Adrenal gland (tissue), 19 donors: ENCODE measurements at regions of chr4 and their contacts with region 1.

Region 1: DNA sequence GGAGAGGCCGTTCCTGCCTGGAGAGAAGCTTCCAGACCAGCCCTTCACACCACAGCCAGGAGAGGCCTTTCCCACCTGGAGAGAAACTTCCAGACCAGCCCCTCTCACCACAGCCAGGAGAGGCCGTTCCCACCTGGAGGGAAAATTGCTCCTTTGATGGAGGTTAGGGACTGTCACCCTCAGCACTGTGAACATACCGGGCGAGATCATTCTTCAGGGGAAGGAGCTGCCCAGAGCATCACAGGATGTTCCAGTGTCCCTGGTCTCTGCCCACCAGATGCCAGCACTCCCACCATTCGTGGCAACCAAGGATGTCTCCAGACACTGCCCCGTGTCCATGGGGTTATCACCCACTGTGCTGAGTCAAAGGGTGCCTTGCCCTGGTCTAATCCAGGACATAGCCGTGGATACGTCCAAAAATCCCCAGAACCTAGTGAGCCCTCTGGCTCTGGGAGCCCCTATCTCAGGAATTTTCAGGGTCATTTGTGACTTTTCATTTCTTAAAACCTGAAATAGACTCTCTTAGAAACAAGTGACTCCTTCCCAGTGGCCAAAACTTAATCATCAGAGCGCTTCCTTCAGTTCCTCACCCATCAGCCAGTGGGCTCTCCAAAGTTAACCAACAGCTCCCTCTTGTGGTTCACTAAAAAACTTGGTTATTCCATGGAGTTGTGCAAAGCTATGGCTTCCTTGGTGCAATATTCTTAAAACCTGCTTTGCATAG is 80.2 kb downstream of the CRMP1 start:
- DNase-seq: peak in 6 of 7 donors; percentile 31 to 44 (median 40)
- H3K4me3 ChIP-seq: no peak overlapping the region
- H3K27ac ChIP-seq: no peak overlapping the region
- H3K4me1 ChIP-seq: no peaks in the 10 kb centered on the region
- H3K27me3 ChIP-seq: no peaks in the 10 kb centered on the region
- CTCF ChIP-seq: peak; percentile 65 to 76 (median 72)
- POLR2A ChIP-seq: no peak

Region 2: DNA sequence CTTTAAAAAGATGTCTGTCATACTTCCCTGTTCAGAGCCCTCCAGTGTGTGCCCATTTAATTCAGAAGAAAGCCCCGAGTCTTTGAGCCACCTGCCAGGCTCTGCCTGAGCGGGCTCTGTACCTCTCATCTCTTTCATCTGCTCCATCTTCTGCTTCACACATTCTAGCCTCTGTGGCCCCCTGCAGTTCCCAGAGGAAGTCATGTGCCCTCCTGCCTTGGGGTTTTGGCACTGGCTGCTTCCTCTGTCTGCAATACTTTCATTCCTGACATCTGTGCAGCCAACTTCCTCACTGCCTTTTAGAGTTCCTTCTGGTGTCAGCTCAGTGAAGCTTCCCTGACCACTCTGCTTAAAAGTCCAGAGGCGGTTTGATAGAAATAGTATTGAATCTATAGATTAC is 767.6 kb before region 1 on chr4:
- intact Hi-C with region 1: loop called in 1 of 2 experiments (anchors 10 kb)
- DNase-seq: peak; percentile 27 to 61 (median 34)
- H3K4me3 ChIP-seq: no peak overlapping the region
- H3K27ac ChIP-seq: peak overlapping the region in 1 of 5 donors; percentile 40
- H3K4me1 ChIP-seq: no peaks in the 10 kb centered on the region
- H3K27me3 ChIP-seq: peaks cover 3% of the 10 kb centered on the region
- CTCF ChIP-seq: no peak
- POLR2A ChIP-seq: no peak

Region 3: GRCh38 chr4:5399790-5400421 is 412.8 kb before region 1 on chr4:
- intact Hi-C with region 1: loop called in 1 of 2 experiments (anchors 5 kb)
- DNase-seq: peak in 3 of 7 donors; percentile 15 to 27 (median 27)
- H3K4me3 ChIP-seq: no peak overlapping the region
- H3K27ac ChIP-seq: no peak overlapping the region
- H3K4me1 ChIP-seq: no peaks in the 10 kb centered on the region
- H3K27me3 ChIP-seq: no peaks in the 10 kb centered on the region
- CTCF ChIP-seq: peak; percentile 37 to 60 (median 44)
- POLR2A ChIP-seq: no peak

Region 4: GRCh38 chr4:5500165-5500564 is 312.5 kb before region 1 on chr4:
- intact Hi-C with region 1: no loop called
- DNase-seq: no peak
- H3K4me3 ChIP-seq: no peak overlapping the region
- H3K27ac ChIP-seq: no peak overlapping the region
- H3K4me1 ChIP-seq: no peaks in the 10 kb centered on the region
- H3K27me3 ChIP-seq: no peaks in the 10 kb centered on the region
- CTCF ChIP-seq: no peak
- POLR2A ChIP-seq: no peak